Activated CD4-positive, alpha-beta memory T cell treated with anti-CD3 and anti-CD28 coated beads, Interleukin-2, amount 10 ng/mL, durations not matched to agents 7 days and 5 days (primary cell): ENCODE measurements at regions of chr7 and their contacts with region 1.

Region 1: DNA sequence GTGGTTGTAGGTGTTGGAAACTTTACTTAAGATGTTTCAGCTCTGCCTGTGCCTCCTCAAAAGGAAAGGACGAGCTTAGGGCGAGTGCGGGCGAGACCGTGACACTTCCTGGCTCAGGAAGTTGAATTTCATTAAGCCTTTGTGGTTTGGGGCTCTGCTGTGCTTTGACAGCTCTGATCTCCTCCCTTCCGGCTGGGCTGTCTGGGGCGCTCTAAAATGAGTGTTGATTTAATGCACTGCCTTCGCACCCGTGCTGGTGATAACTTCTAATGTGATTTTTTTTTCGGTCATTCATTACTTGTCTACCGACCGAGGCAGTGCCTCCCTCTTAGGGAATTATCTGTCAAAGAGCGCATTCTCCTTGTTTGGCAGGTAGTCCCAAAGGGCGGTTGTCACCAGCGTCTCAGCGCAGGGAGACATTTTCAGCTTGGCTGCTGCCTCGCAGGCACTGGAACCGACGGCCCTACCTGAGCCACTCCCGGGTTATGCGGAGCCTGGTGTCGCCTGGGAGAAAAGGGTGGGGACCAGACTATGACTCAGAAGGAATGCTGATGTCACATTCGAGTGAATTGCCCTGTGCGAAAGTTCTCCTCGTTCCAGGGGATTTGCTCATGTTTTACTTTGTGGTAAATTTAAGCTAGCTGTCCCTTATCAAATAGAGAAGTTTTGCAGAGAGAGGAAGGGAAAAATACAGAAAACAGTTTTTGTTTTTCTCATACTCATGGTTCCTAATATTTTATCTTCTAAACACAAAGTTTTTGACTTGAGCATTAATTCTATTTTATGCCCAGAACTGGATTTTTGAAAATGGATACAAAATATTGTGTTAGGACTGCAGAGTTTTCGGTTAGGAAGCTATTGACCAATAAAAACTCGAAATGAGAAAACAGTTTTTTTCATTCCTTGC is 920 bp downstream of the TES start:
- DNase-seq: peak; percentile 82
- H3K4me3 Mint-ChIP-seq: peak overlapping the region; percentile 91
- H3K27ac Mint-ChIP-seq: peak overlapping the region; percentile 97
- H3K4me1 Mint-ChIP-seq: peaks cover 52% of the 10 kb centered on the region
- H3K27me3 Mint-ChIP-seq: no peaks in the 10 kb centered on the region

Region 2: DNA sequence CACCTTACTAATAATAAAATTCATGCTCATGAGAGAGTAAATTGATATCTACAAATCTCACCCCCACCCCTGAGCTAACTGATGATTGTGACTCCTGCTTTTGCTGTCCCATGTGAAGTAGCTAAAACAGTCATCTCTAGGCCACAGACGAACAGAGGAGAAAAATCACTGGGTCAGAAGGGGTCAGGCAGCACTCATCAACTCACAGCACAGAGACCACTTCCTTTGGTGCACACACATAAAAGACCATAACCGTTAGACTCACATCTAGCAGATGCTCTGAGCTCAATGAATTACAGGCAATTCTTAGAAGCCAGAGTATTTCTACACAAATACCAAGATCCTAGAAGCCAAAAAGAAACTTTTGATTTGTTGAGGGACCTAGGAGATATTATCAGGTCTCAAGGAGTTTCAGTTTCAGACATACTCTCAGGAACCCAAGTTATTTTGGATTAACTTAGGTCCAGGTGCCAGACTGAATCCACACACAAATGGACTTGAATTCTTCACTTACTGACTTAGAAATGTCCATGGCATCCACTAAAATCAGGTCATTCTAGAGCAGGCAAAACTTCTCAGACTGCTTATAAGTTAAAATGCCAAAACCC is 65.9 kb before region 1 on chr7:
- CTCF ChIA-PET with region 1: interaction called, 4 read pairs
- POLR2A ChIA-PET with region 1: interaction called, 14 read pairs
- DNase-seq: peak; percentile 53
- H3K4me3 Mint-ChIP-seq: peak overlapping the region; percentile 19
- H3K27ac Mint-ChIP-seq: peak overlapping the region; percentile 72
- H3K4me1 Mint-ChIP-seq: peaks cover 52% of the 10 kb centered on the region
- H3K27me3 Mint-ChIP-seq: peaks cover 2% of the 10 kb centered on the region

Region 3: DNA sequence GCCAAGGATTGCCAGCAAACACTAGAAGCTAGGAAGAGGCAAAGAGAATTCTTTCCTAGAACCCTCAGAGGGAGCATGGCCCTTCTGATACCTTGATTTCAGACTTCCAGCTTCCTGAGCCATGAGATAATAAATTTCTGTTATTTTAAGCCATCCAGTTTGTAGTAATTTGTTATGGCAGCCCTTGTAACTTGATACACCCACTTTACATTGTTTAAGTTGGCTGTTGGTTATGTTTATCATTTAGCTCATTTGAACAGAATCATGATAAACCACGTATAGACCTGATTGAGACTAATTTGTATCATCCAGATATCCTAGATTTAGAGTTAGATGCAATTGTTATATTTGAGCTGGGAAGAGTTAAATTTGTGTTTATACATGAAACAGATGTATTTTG is 10.3 kb before region 1 on chr7:
- CTCF ChIA-PET with region 1: interaction called, 3 read pairs
- POLR2A ChIA-PET with region 1: interaction called, 13 read pairs
- DNase-seq: no peak
- H3K4me3 Mint-ChIP-seq: no peak overlapping the region
- H3K27ac Mint-ChIP-seq: no peak overlapping the region
- H3K4me1 Mint-ChIP-seq: no peaks in the 10 kb centered on the region
- H3K27me3 Mint-ChIP-seq: peaks cover 18% of the 10 kb centered on the region

Region 4: DNA sequence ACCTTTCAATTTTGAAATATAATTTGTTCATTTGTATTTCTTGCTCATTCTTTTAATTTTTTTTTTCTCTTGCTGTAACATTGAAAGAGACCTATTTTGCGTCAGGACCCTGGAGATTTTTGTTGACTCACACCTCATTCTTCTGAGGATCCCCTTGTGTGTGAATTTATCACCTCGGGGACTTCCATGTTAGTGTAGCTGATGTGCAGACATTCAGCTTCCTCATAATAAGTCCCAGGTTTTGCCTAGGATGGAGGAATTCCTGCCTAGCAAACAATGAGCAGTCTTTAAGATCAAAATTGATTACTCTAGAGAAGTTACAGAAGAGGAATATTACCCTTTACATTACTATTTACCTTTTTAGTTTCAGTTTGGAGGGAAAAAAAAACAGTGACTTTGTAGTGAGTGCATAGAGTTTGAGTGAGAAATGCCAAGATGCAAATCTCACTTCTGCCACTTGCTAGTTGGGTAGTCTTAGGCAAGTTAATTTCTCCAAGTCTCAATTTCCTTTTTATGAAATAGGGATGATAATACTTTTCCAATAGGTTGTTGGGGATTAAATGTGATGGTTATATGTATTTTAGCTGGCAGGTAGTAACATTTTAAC is 13.3 kb after region 1 on chr7:
- CTCF ChIA-PET with region 1: interaction called, 9 read pairs
- POLR2A ChIA-PET with region 1: interaction called, 58 read pairs
- DNase-seq: no peak
- H3K4me3 Mint-ChIP-seq: no peak overlapping the region
- H3K27ac Mint-ChIP-seq: no peak overlapping the region
- H3K4me1 Mint-ChIP-seq: peaks cover 61% of the 10 kb centered on the region
- H3K27me3 Mint-ChIP-seq: no peaks in the 10 kb centered on the region

Region 5: DNA sequence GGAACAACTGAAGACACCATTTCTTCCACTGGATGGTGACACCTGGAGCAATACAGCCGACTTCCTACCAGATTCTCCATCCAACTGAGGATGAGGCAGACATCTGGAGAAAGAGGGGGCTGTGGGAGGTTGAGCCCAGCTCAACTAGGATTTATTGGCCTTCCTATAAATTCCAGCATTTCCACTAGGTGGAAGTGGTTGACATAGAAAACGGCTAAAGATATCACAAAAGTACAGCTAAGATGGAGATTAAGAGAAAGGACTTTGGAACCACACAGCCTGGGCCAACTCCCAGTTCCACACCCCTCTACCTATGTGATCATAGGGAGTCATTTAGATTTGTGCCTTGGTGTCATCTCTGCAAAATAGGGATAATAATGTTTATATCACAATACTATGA is 227.0 kb after region 1 on chr7:
- CTCF ChIA-PET with region 1: no interaction called
- POLR2A ChIA-PET with region 1: no interaction called
- DNase-seq: no peak
- H3K4me3 Mint-ChIP-seq: no peak overlapping the region
- H3K27ac Mint-ChIP-seq: no peak overlapping the region
- H3K4me1 Mint-ChIP-seq: no peaks in the 10 kb centered on the region
- H3K27me3 Mint-ChIP-seq: peaks cover 8% of the 10 kb centered on the region